ENCODE measurements at regions of chr4 and their contacts with region 1.

Region 1: DNA sequence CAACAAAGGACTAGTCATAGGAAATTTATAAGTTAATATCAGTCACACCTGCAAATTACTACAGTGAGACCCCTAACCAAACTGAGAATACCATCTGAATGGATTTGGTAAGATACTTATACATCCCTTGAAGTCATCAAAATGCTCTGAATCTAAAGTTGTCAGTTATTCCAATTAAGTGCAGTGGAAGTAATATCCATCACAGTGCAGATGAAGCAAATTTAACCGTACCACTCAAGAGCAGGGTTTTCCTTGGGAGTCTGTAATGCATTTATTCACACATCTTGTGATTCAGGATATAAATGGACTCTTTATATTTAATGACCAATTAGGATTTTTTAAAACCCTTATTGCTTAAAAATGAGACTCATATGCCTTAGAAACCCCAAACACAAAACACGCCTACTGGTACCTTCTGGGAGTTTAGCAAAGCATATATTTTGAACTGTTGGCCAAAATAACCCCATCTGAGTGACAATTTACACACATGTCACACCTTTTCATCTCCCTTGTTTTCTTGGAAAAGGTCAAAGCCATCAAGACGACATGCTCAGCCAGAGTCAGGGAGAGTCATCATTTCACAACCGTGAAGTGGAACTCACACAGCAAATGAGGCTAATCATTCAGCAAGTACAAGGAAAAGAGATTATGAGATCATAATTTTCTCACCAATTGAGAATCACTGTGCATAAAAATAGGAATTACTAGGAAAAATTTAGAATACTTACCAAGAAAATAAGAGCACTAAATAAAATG is 303.7 kb downstream of the HNRNPD start:
- DNase-seq: no peak
- H3K4me3 ChIP-seq: no peak overlapping the region
- CTCF ChIP-seq: no peak

Region 2: DNA sequence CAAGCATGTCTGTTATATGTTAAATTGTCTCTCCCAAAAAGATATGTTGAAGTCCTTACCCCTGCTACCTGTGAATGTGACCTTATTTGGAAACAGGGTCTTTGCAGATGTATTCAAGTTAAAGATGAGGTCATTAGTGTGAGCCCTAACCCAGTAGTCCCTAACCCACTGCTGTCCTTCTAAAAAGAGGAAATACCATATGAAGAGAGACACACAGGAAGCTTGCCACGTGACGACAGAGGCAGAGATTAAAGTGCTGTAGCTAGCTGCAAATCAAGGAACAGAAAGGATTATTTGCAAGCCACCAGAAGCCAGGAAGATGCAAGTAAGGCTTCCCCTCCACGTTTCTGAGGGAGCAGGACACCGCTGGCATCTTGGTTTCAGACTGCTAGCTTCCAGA is 153.7 kb after region 1 on chr4:
- in situ Hi-C with region 1: loop called (anchors 10 kb)
- DNase-seq: no peak
- H3K4me3 ChIP-seq: no peak overlapping the region
- CTCF ChIP-seq: no peak